BJ (cell line): ENCODE measurements at regions of chr20 and their contacts with region 1.

Region 1: GRCh38 chr20:52312132-52312729 is 120.7 kb upstream of the ZFP64 start:
- DNase-seq: no peak
- H3K4me3 ChIP-seq: no peak overlapping the region
- H3K27me3 ChIP-seq: no peaks in the 10 kb centered on the region
- CTCF ChIP-seq: peak; percentile 73

Region 2: DNA sequence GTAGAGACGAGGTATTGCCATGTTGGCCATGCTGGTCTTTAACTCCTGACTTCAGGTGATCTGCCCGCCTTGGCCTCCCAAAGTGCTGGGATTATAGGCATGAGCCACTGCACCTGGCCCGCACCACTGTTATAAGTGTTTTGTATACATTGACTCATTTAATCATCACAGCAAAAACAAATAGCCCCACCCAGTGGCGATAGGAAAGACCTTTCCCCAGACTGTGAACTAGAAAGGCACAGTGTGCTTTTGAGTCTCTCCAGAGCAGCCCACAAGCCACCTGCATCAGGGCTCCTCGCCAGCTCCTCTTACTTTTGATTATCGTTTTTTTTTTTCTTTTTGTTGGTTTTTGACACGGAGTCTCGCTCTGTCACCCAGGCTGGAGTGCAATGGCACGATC is 92.8 kb before region 1 on chr20:
- CTCF ChIA-PET with region 1: no interaction called
- POLR2A ChIA-PET with region 1: no interaction called
- DNase-seq: no peak
- H3K4me3 ChIP-seq: no peak overlapping the region
- H3K27me3 ChIP-seq: no peaks in the 10 kb centered on the region
- CTCF ChIP-seq: no peak

Region 3: GRCh38 chr20:52295556-52295955 is 16.7 kb before region 1 on chr20:
- CTCF ChIA-PET with region 1: interaction called, 20 read pairs
- POLR2A ChIA-PET with region 1: no interaction called
- DNase-seq: no peak
- H3K4me3 ChIP-seq: no peak overlapping the region
- H3K27me3 ChIP-seq: no peaks in the 10 kb centered on the region
- CTCF ChIP-seq: no peak

Region 4: DNA sequence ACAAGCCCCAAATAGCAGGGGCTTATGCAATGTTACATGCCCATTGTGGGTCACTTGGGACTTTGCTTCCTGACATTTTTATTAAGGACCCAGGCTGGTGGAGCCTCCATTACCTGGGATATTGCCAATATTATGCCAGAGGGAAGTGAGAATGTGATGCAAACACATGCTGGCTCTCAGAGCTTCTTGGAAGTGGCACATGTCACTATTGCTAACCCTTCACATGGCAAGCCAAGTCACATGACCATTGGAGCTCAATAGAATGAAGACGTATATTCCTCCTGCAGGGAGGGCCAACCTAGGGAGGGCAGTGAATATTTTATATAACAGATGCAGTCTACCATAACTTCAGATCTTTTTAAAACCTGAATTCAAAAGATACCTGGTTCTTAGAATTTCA is 20.0 kb after region 1 on chr20:
- CTCF ChIA-PET with region 1: interaction called, 11 read pairs
- POLR2A ChIA-PET with region 1: no interaction called
- DNase-seq: no peak
- H3K4me3 ChIP-seq: no peak overlapping the region
- H3K27me3 ChIP-seq: no peaks in the 10 kb centered on the region
- CTCF ChIP-seq: no peak